Right ventricle myocardium superior (tissue), 1 donor: ENCODE measurements at regions of chrX and their contacts with region 1.

Region 1: GRCh38 chrX:9464435-9465371 is at the start of gene TBL1X:
- DNase-seq: peak; percentile 74
- ATAC-seq: peak; percentile 71
- total RNA-seq, gene TBL1X: 10.1 TPM

Region 2: GRCh38 chrX:9341291-9342201 is 123.2 kb before region 1 on chrX:
- intact Hi-C with region 1: loop called (anchors 5 kb)
- DNase-seq: peak; percentile 81
- ATAC-seq: peak; percentile 38

Region 3: GRCh38 chrX:9525511-9526248 is 61.0 kb after region 1 on chrX:
- intact Hi-C with region 1: loop called (anchors 10 kb)
- DNase-seq: no peak
- ATAC-seq: no peak

Region 4: DNA sequence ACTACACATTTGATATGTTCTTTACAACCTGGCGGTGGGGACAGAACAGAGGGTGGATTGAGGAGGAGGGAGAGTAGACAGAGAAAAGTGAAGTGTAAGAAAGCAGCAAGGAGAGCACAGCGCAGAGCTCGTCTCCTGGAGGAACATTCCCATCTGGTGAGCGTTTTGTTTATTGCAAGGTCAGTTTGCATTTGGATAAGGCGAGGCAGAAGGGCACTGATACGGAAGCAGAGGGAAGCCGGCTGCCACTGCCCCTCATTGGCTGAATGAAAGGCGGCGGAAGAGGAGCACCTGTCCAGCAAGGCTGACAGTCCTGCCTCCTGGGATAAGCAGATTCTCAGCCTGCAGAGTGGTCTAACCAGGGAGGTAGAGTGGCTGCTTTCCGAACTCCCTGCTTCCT is 217.8 kb after region 1 on chrX:
- intact Hi-C with region 1: loop called (anchors 10 kb)
- DNase-seq: no peak
- ATAC-seq: peak; percentile 57